ENCODE measurements at regions of chr15 and their contacts with region 1.

Region 1: GRCh38 chr15:84658080-84658787 is at the start of gene NMB:
- DNase-seq: no peak
- ATAC-seq: peak; percentile 79
- H3K4me3 ChIP-seq: peak within 1 kb of the TSS; percentile 52 to 70
- H3K27ac ChIP-seq: peak within 1 kb of the TSS; percentile 84
- H3K4me1 ChIP-seq: peaks cover 24% of the 10 kb centered on the region
- H3K27me3 ChIP-seq: no peaks in the 10 kb centered on the region
- CTCF ChIP-seq: peak; percentile 84
- total RNA-seq, gene NMB: 9.5 TPM

Region 2: GRCh38 chr15:84398763-84399701 is 259.2 kb before region 1 on chr15:
- CTCF ChIA-PET with region 1: no interaction called
- POLR2A ChIA-PET with region 1: no interaction called
- in situ Hi-C with region 1: no loop called
- intact Hi-C with region 1: no loop called
- DNase-seq: no peak
- ATAC-seq: peak; percentile 38; the same call in 1 of the 2 replicates
- H3K4me3 ChIP-seq: no peak overlapping the region
- H3K27ac ChIP-seq: no peak overlapping the region
- H3K4me1 ChIP-seq: no peaks in the 10 kb centered on the region
- H3K27me3 ChIP-seq: no peaks in the 10 kb centered on the region
- CTCF ChIP-seq: no peak

Region 3: GRCh38 chr15:84621358-84621979 is 36.8 kb before region 1 on chr15:
- CTCF ChIA-PET with region 1: no interaction called
- POLR2A ChIA-PET with region 1: no interaction called
- in situ Hi-C with region 1: no loop called
- intact Hi-C with region 1: no loop called
- DNase-seq: no peak
- ATAC-seq: no peak
- H3K4me3 ChIP-seq: no peak overlapping the region
- H3K27ac ChIP-seq: no peak overlapping the region
- H3K4me1 ChIP-seq: no peaks in the 10 kb centered on the region
- H3K27me3 ChIP-seq: no peaks in the 10 kb centered on the region
- CTCF ChIP-seq: no peak

Region 4: DNA sequence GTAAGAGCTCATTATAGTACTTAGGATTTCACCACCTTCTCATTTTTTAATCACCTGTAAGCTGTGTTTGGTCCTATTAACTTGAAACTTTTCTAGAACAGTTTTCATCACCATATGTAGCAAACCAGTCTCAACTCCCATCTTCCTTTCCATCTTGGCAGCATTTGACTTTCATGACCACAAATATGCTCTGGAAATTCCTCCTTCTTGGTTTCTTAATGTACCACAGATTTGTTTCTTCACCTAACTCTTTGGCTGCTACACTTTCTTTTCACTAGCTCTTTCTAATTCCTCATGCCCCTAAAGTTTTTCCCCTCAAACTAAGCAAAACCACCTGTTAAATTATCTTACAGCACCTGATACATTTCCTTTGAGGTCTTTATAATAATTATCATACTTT is 13.0 kb after region 1 on chr15:
- CTCF ChIA-PET with region 1: no interaction called
- POLR2A ChIA-PET with region 1: no interaction called
- in situ Hi-C with region 1: no loop called
- intact Hi-C with region 1: no loop called
- DNase-seq: no peak
- ATAC-seq: no peak
- H3K4me3 ChIP-seq: no peak overlapping the region
- H3K27ac ChIP-seq: no peak overlapping the region
- H3K4me1 ChIP-seq: no peaks in the 10 kb centered on the region
- H3K27me3 ChIP-seq: no peaks in the 10 kb centered on the region
- CTCF ChIP-seq: no peak

Region 5: GRCh38 chr15:84697236-84697990 is 39.2 kb after region 1 on chr15:
- CTCF ChIA-PET with region 1: no interaction called
- POLR2A ChIA-PET with region 1: interaction called, 13 read pairs
- in situ Hi-C with region 1: no loop called
- intact Hi-C with region 1: no loop called
- DNase-seq: no peak
- ATAC-seq: no peak
- H3K4me3 ChIP-seq: no peak overlapping the region
- H3K27ac ChIP-seq: no peak overlapping the region
- H3K4me1 ChIP-seq: no peaks in the 10 kb centered on the region
- H3K27me3 ChIP-seq: no peaks in the 10 kb centered on the region
- CTCF ChIP-seq: no peak

Measured in Panc1 (cell line).